Posterior cingulate gyrus (tissue), 11 donors: ENCODE measurements at regions of chr20 and their contacts with region 1.

Region 1: DNA sequence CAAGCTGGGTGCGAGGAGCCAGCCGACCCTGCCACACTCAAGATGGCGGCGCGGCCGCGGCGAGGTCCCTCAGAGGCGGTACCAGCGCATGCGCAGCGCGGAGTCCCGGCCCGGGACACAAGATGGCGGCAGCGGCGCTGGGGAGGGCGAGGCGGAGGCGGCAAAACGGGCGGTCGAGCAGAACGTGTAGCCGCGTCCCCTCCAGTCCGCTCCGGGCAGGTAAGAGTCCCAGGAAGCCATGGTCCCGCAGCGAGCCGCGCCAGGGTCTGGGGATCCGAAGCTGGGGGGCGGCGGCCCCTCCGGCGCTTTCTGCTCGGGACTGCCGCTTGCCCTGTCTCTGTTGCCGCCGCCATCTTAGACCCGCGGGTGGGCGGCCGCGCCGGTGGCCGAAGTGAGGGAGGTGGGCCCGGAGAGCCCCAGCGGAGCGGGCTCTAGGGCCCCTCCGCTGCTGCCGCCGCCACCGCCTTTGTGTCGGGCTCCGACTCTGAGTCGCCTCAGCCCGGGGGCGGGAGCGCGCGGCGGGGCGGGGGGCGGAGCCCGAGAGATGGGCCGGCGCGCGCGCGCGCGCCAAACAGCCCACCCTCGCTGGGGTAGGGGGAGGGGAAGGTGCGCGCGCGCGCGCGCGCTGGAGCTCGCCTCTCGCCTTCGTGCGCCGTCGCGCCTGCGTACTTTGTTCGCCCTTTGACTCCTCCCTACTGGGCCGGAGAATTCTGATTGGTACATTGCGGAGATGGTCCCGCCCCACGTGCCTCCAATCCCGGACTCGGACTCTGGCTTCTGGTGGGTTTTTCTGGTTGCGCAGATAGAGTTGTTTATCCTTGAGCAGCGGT is at the start of gene PCIF1:
- DNase-seq: peak; percentile 93 to 100 (median 97)

Region 2: DNA sequence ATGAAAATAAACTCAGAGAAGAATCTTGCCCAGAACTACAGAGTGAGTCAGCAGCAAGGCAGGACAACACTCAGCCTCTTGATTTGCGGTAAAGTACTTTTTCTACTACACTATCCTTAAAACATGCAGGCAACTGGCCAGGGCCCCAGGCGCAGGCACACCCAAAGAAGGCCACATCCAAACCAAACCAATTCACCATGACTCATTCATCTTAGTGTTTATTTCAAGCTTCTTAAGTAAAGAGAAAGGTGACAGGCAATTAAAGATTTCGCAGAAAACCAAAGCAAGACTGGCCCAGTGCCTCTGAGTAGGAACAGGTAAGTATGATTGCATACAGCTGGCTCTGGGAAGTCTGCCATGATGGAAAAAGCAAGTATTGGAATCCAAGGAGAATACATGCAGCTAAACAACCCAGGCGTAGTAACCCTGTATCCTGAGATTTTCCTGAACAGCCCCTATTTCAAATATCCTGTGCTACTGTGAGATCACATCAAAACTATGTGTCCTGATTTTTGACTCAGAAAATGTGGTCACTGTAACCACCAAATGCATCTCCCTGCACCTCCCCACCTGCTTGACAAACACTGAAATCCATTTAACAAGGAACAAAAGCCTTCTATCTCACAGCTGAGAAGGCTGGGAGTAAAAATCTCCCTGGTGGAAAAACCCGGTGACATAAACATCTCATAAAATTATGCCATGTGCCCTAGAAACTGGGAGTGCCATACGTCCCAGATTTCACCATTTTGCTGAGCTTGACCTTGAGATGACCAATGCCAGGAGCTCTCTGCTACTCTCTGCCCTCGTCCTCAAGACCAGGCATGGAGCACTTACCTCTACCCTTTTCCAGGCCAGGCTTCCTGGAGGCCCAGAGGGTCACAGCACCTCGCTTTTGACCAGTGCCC is 155.5 kb before region 1 on chr20:
- intact Hi-C with region 1: no loop called
- DNase-seq: peak in 8 of 10 donors; percentile 14 to 94 (median 58)

Region 3: DNA sequence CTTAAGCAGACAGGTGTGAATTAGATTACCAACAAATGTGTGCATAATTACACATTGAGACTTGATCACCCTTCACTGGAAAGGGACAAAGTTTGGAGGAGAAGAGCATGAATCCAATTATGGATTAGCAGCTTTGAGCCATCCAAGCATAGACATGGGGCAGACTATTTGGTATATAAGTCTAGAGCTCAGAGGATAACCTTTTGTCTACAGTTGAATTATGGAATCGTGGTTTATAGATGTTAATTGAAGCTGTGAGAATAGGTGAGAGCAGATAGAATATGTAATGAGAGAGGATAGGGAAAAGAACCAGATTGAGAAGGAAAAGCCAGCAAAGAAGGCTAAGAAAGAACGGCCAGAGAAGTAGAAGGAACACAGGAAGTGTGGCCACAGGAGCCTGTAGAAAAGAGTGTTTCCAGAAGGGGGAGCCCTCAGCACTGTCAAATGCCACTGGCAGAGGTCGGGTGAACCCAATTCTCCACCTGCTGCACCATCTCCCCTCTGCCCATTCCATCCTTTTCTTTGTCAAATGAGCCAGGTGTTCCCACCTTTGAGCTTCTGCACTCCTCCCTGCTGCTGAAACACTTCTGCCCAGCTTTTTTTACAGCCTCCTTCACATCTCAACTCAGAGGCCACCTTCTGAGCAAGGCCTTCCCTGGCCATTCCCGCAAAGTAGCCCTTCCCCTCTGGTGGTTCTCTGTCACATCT is 135.7 kb before region 1 on chr20:
- intact Hi-C with region 1: loop called (anchors 10 kb)
- DNase-seq: peak in 6 of 10 donors; percentile 30 to 87 (median 48)

Region 4: GRCh38 chr20:45890985-45891983 is 43.5 kb before region 1 on chr20 and contains the starts of genes CTSA and NEURL2:
- intact Hi-C with region 1: loop called (anchors 5 kb)
- DNase-seq: peak; percentile 87 to 99 (median 94)

Region 5: GRCh38 chr20:45971675-45972499 is 37.1 kb after region 1 on chr20 and contains the start of gene ZNF335:
- intact Hi-C with region 1: loop called (anchors 2 kb)
- DNase-seq: peak; percentile 89 to 99 (median 95)